HCT116 (cell line): ENCODE measurements at regions of chr22 and their contacts with region 1.

Region 1: GRCh38 chr22:41697126-41697775 is 2.1 kb upstream of the MEI1 start:
- DNase-seq: peak; percentile 68
- ATAC-seq: peak; percentile 91
- H3K4me3 ChIP-seq: no peak overlapping the region
- H3K27ac ChIP-seq: peak overlapping the region; percentile 45
- H3K4me1 ChIP-seq: peaks cover 3 to 12% of the 10 kb centered on the region in 2 experiments
- H3K27me3 ChIP-seq: no peaks in the 10 kb centered on the region
- CTCF ChIP-seq: peak; percentile 96 to 99 (median 98)
- POLR2A ChIP-seq: no peak
- RAD21 ChIP-seq: peak; percentile 95

Region 2: GRCh38 chr22:41666661-41667258 is 30.5 kb before region 1 on chr22:
- CTCF ChIA-PET with region 1: interaction called, 18 read pairs
- POLR2A ChIA-PET with region 1: no interaction called
- RAD21 ChIA-PET with region 1: no interaction called
- intact Hi-C with region 1: no loop called
- DNase-seq: peak; percentile 84
- ATAC-seq: peak; percentile 83
- H3K4me3 ChIP-seq: peak overlapping the region; percentile 56 to 61
- H3K27ac ChIP-seq: peak overlapping the region; percentile 86
- H3K4me1 ChIP-seq: peaks cover 19 to 50% of the 10 kb centered on the region in 2 experiments
- H3K27me3 ChIP-seq: no peaks in the 10 kb centered on the region
- CTCF ChIP-seq: peak; percentile 98 to 100 (median 99)
- POLR2A ChIP-seq: peak; percentile 88
- RAD21 ChIP-seq: peak; percentile 86

Region 3: DNA sequence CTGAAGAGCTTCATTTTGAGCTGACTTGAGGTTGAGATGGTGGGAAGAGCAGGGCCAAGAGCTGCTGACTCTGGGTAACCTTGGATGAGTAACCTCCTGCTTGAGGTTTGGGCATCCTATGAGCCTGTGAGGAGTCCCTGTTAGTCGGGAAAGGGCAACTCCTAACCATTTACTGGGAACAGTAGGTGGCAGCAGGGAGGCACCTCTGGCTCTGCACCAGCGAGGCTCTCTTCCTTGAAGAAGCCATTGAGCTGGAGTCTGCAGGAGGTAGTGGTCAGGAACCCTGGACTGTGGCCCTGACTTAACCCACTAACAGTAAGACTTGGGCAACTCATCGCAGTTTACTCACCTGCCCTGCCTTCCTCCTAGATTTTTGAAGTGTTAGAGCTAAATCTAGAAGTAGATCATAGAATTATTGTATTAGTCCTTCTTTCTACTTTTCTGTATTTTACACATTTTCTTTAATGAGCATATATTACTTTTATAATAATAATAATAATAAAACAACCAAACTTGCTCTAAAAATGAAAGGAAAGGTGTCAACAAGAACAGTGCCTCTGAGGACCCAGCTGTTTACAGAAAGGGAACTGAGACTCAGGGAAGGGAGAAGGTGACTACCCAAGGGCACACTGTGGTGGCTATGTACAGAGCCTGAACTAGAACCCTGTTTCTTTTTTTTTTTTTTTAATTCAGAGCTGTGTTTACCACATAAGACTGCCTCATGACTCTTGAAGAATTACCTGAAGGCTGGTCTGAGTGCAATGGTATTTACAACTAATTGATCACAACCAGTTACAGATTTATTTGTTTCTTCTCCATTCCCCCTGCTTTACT is 49.5 kb after region 1 on chr22:
- CTCF ChIA-PET with region 1: interaction called, 22 read pairs
- POLR2A ChIA-PET with region 1: no interaction called
- RAD21 ChIA-PET with region 1: interaction called in 1 of 2 experiments, 3 read pairs
- intact Hi-C with region 1: no loop called
- DNase-seq: peak; percentile 69
- ATAC-seq: peak; percentile 100
- H3K4me3 ChIP-seq: no peak overlapping the region
- H3K27ac ChIP-seq: no peak overlapping the region
- H3K4me1 ChIP-seq: peaks cover 0 to 5% of the 10 kb centered on the region in 2 experiments; a peak in 2 of 4 replicates
- H3K27me3 ChIP-seq: no peaks in the 10 kb centered on the region; the same call in 1 of the 2 replicates
- CTCF ChIP-seq: peak; percentile 69 to 85 (median 81); a peak in 5 of 6 replicates
- POLR2A ChIP-seq: no peak
- RAD21 ChIP-seq: peak; percentile 82

Region 4: GRCh38 chr22:41857155-41857859 is 160.1 kb after region 1 on chr22:
- CTCF ChIA-PET with region 1: interaction called, 26 read pairs
- POLR2A ChIA-PET with region 1: no interaction called
- RAD21 ChIA-PET with region 1: interaction called in 1 of 2 experiments, 5 read pairs
- intact Hi-C with region 1: loop called (anchors 1 kb)
- DNase-seq: peak; percentile 65
- ATAC-seq: peak; percentile 92
- H3K4me3 ChIP-seq: no peak overlapping the region
- H3K27ac ChIP-seq: peak overlapping the region; percentile 53
- H3K4me1 ChIP-seq: peaks cover 36 to 42% of the 10 kb centered on the region in 2 experiments
- H3K27me3 ChIP-seq: no peaks in the 10 kb centered on the region
- CTCF ChIP-seq: peak; percentile 64 to 86 (median 76); a peak in 5 of 6 replicates
- POLR2A ChIP-seq: no peak
- RAD21 ChIP-seq: peak; percentile 65

Region 5: DNA sequence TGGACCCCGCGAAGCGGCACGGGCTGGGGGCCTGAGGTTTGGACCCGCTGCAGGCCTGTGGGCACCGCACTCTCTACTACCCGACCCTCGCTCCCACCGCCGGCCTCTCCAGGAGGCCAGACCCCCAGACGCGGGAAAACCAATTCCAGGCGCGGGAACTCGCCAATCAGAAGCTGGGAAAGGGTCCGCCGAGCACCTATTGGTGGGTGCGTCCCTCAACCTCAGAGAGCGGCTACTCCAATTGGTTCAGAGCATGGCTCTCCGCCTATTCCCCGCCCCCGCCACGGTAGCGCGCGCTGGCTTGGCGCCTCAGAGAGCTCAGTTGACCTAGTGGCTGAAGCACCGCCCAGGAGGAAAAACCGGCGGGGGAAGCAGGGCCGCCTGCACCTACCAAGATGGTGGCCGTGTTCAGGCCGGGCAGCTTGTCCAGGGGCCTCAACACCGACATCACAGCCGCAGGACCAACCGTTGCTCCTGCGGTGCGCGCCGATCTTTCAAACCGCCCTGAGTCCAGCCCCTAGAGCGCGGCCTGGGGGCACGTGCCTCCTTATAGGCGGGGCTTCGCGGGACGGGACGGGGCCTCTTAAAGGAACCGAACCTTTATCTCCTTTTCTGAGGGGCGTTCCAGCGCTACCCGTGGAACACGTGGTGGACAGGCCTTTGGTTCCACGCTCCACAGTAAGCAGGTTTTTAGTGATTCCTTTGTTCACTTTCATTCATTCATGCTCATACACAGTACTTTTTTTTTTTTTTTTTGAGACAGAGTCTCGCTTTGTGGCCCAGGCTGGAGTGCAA is 249.6 kb after region 1 on chr22 and contains the start of gene CENPM:
- CTCF ChIA-PET with region 1: interaction called, 62 read pairs
- POLR2A ChIA-PET with region 1: no interaction called
- RAD21 ChIA-PET with region 1: interaction called, 3 read pairs
- intact Hi-C with region 1: no loop called
- DNase-seq: peak; percentile 92
- ATAC-seq: peak; percentile 95
- H3K4me3 ChIP-seq: peak within 1 kb of the TSS; percentile 74 to 85
- H3K27ac ChIP-seq: peak within 1 kb of the TSS; percentile 86
- H3K4me1 ChIP-seq: peaks cover 14 to 41% of the 10 kb centered on the region in 2 experiments
- H3K27me3 ChIP-seq: no peaks in the 10 kb centered on the region
- CTCF ChIP-seq: no peak
- POLR2A ChIP-seq: peak; percentile 84
- RAD21 ChIP-seq: no peak
- total RNA-seq, gene CENPM: 44.7 TPM